Activated CD8-positive, alpha-beta memory T cell treated with anti-CD3 and anti-CD28 coated beads, Interleukin-2, amount 10 ng/mL, durations not matched to agents 7 days and 5 days (primary cell): ENCODE measurements at regions of chr2 and their contacts with region 1.

Region 1: DNA sequence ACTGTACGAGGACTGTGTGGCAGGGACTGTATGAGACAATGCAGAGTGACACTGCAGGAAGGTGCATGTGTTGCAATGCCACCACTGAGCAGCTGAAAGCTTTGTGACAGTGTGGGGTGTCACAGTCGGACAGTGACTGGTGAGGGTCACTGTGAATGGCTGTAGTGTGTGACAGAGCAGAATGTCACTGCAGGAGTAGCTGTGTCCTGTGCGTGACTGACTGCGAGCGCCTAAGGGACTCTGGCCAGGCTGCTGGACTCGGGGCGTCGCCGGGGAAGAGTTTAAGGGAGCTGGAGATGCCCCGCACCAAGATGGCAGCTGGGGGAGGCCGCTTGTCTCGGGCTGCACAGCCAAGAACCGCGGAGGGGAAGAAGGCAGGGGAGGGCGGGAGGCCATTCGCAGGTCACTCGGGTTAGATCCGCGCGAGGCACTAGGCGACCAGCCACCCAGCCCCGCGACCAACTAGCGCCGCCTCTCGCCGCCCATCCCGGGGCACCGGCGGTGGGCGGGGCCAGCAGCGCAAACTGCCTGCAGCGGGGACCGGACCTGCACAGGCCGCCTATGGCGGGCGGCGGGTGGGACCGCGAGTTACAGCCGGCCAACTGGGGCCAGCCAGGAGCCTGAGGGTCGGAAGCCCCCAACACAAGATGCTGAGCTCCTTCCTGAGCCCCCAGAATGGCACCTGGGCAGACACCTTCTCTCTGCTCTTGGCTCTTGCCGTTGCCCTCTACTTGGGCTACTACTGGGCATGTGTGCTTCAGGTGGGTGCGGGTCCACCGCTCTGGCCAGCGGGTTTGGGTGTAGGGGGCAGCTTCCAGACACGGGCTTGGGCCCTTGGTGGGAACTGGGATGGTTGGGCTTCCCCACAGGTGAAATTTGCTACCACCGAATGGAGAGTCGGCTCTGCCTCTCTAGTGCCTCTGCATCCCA is at the start of gene ABHD1:
- DNase-seq: peak; percentile 64
- ATAC-seq: peak; percentile 92
- H3K4me3 Mint-ChIP-seq: peak within 1 kb of the TSS; percentile 79
- H3K27ac Mint-ChIP-seq: peak within 1 kb of the TSS; percentile 41
- H3K4me1 Mint-ChIP-seq: peaks cover 16% of the 10 kb centered on the region
- H3K27me3 Mint-ChIP-seq: peaks cover 29% of the 10 kb centered on the region
- total RNA-seq, gene ABHD1: 0.21 to 0.29 TPM

Region 2: DNA sequence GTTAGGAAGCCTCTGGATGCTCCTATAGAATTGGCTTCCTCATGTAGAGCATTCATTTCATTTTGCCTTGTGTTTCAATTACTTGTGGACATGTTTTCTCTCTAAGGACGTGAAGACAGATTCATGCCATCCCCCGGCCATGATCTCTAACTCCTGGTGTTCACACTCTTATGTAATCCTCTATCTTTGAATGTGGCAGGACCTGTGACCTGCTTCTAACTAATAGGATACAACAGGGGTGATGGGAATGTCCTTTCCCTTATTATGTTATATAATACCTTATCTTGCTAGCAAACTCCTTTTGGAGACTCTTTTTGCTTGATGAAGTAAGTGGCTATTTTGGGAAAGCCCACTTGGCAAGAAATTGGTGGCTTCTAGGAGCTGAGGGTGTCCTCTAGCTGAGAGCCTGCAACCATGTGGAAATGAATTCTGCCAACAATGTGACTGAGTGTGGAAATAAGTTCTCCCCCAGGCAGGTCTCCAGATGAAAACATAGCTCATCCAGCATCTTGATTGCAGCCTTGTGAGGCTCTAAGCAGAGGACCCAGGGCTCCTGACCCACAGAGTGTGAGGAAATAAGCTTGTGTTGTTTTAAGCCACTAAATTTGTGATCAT is 261.9 kb before region 1 on chr2:
- CTCF ChIA-PET with region 1: no interaction called
- DNase-seq: no peak
- ATAC-seq: no peak
- H3K4me3 Mint-ChIP-seq: no peak overlapping the region
- H3K27ac Mint-ChIP-seq: no peak overlapping the region
- H3K4me1 Mint-ChIP-seq: no peaks in the 10 kb centered on the region
- H3K27me3 Mint-ChIP-seq: peaks cover 31% of the 10 kb centered on the region

Region 3: DNA sequence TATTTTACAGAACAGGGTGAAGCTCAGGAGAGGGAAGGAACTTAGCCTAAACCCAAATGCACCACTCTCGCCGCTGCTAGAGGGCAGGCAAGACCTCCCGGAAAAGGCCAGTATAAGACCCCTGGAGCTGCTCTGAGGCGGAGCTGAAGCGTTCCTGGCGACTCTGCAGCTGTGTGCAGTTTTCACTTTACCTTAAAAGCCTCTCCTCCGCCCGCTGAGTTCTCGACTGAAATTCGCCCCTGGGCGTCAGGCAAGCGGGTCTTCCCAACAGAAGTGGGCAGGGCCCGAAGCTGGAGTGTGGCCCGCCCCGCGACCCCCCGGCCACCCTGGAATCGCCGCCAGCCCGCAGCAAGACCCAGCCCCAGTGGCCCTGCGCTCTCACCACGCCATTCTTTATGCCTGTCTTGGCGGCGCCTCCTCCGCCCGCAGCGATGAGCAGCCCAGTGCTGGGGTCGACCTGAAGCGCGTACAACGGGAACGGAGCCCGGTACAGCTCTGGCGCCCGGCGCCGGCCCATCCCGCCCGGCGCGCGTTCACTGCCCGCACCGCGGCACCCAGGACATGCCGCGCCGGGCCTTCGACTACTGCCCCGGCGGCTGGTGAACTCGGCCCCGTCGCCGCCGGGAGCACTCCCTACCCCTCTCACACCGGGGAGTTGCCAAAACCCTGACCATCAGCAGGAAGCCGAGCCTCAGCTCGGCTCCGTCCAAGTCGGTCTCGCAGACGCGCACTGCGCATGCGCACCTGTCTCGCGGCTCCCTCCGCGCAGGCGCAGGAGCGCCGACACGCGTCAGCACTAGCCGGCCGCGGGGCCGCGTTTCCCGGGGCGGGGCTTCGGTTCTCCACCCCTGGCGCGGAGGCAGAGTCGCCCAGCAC is 10.6 kb after region 1 on chr2 and contains the start of gene PREB:
- CTCF ChIA-PET with region 1: interaction called, 32 read pairs
- DNase-seq: peak; percentile 99
- ATAC-seq: peak; percentile 98
- H3K4me3 Mint-ChIP-seq: peak within 1 kb of the TSS; percentile 93
- H3K27ac Mint-ChIP-seq: peak within 1 kb of the TSS; percentile 97
- H3K4me1 Mint-ChIP-seq: peaks cover 26% of the 10 kb centered on the region
- H3K27me3 Mint-ChIP-seq: no peaks in the 10 kb centered on the region
- total RNA-seq, gene PREB: 61.6 to 69.4 TPM